Aorta (tissue), 5 donors: ENCODE measurements at regions of chr3 and their contacts with region 1.

Region 1: GRCh38 chr3:11271986-11272904 is at the start of gene ATG7:
- DNase-seq: peak; percentile 99
- ATAC-seq: peak; percentile 99
- H3K4me3 ChIP-seq: peak within 1 kb of the TSS; percentile 76 to 89
- H3K27ac ChIP-seq: peak within 1 kb of the TSS in 1 of 2 donors; percentile 71
- H3K4me1 ChIP-seq: peaks cover 0 to 2% of the 10 kb centered on the region in 2 donors
- H3K27me3 ChIP-seq: no peaks in the 10 kb centered on the region
- total RNA-seq, gene ATG7: 46.1 to 84.1 TPM

Region 2: GRCh38 chr3:11230125-11230524 is 42.1 kb before region 1 on chr3:
- intact Hi-C with region 1: loop called in 1 of 2 experiments (anchors 5 kb)
- DNase-seq: no peak
- ATAC-seq: no peak
- H3K4me3 ChIP-seq: no peak overlapping the region
- H3K27ac ChIP-seq: peak overlapping the region in 1 of 2 donors; percentile 78
- H3K4me1 ChIP-seq: peaks cover 0 to 2% of the 10 kb centered on the region in 2 donors
- H3K27me3 ChIP-seq: no peaks in the 10 kb centered on the region

Region 3: GRCh38 chr3:11288786-11289682 is 16.8 kb after region 1 on chr3:
- intact Hi-C with region 1: loop called in 1 of 2 experiments (anchors 2 kb)
- DNase-seq: no peak
- ATAC-seq: peak; percentile 82
- H3K4me3 ChIP-seq: peak overlapping the region in 1 of 2 donors; percentile 9
- H3K27ac ChIP-seq: peak overlapping the region; percentile 78 to 88
- H3K4me1 ChIP-seq: peaks cover 5 to 12% of the 10 kb centered on the region in 2 donors
- H3K27me3 ChIP-seq: no peaks in the 10 kb centered on the region